Breast epithelium (tissue), 4 donors: ENCODE measurements at regions of chr14 and their contacts with region 1.

Region 1: GRCh38 chr14:26808403-26808802 is 210.6 kb upstream of the NOVA1 start:
- DNase-seq: no peak
- H3K4me3 ChIP-seq: no peak overlapping the region
- H3K27ac ChIP-seq: no peak overlapping the region
- H3K4me1 ChIP-seq: no peaks in the 10 kb centered on the region
- H3K27me3 ChIP-seq: no peaks in the 10 kb centered on the region
- CTCF ChIP-seq: no peak
- POLR2A ChIP-seq: no peak

Region 2: DNA sequence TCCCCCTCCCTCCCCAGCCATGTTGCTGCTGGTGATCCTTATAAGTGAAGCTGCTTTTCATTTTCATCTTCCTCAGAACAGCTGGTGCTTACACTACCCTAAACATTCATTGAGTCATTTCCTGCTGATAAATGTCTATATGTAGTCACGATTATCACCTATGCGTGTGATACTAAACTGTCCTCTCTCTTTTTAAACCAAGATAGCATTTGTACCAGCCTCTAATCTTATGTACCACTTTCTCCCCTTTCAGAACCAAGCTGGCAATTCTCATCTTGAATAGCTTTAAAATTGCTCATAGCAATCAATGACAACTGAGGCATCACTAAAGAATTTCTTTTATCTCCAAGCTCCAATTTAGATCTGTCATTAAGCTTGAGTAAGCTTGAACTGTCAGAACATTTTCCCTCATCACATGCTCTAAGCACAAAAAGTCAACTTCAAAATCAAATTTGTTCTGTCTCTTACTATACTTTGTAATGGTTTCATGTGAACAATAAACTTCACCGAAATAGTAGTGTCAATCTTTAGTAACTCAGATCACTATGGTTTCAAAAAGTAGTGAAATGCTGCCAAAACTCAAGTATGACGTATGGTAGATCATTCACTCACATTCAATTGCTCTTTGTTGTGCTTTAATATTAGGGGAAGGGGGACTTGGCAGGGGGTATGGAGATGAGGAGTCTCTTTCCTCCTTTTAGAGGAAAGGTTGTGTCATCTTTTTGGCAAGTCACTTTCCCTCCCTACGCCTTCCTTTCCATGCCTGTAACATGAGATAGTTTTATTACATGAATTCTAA is 32.4 kb before region 1 on chr14:
- intact Hi-C with region 1: no loop called
- DNase-seq: no peak
- H3K4me3 ChIP-seq: no peak overlapping the region
- H3K27ac ChIP-seq: no peak overlapping the region
- H3K4me1 ChIP-seq: no peaks in the 10 kb centered on the region
- H3K27me3 ChIP-seq: no peaks in the 10 kb centered on the region
- CTCF ChIP-seq: no peak
- POLR2A ChIP-seq: no peak

Region 3: GRCh38 chr14:28756884-28757570 is 1948.6 kb after region 1 on chr14:
- intact Hi-C with region 1: loop called (anchors 5 kb)
- DNase-seq: no peak
- H3K4me3 ChIP-seq: no peak overlapping the region
- H3K27ac ChIP-seq: no peak overlapping the region
- H3K4me1 ChIP-seq: no peaks in the 10 kb centered on the region
- H3K27me3 ChIP-seq: peaks cover 0 to 77% of the 10 kb centered on the region in 2 donors
- CTCF ChIP-seq: peak in 1 of 3 donors; percentile 34
- POLR2A ChIP-seq: no peak